Heart right ventricle (tissue), 16 donors: ENCODE measurements at regions of chr18 and their contacts with region 1.

Region 1: DNA sequence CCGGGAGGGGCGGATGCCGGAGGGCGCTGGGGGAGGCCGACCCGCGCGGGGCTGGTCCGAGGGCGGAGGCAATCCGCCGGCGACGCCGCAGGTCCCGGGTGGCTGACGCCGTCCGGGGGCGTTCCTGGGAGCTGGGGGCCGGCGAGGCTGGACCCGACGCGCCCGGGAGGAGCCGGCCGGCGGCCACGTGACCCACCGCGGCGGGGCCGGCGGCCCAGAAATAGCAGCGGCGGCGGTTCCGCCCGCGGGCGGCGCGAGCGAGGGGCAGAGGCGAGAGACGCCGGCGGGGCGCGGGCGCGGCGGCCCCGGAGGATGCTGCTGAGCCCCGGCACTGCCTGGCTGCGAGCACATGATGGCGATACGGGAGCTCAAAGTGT is at the start of gene RAB31:
- DNase-seq: peak; percentile 78 to 86
- ATAC-seq: peak; percentile 87 to 97 (median 92)
- H3K4me3 ChIP-seq: peak within 1 kb of the TSS; percentile 23 to 89 (median 78)
- H3K27ac ChIP-seq: peak within 1 kb of the TSS; percentile 75 to 96 (median 88)
- H3K4me1 ChIP-seq: peaks cover 0 to 69% (median 18%) of the 10 kb centered on the region in 9 donors
- H3K27me3 ChIP-seq: no peaks in the 10 kb centered on the region
- CTCF ChIP-seq: no peak
- total RNA-seq, gene RAB31: 12.7 to 47.8 (median 17.0) TPM

Region 2: GRCh38 chr18:9771261-9771976 is 63.4 kb after region 1 on chr18:
- intact Hi-C with region 1: loop called in 2 of 10 experiments (anchors 5 to 10 kb)
- DNase-seq: peak; percentile 88 to 89
- ATAC-seq: peak; percentile 90 to 98 (median 95)
- H3K4me3 ChIP-seq: peak overlapping the region in 1 of 10 donors; percentile 27
- H3K27ac ChIP-seq: peak overlapping the region in 4 of 10 donors; percentile 18 to 86 (median 28)
- H3K4me1 ChIP-seq: peaks cover 0 to 86% (median 8%) of the 10 kb centered on the region in 9 donors
- H3K27me3 ChIP-seq: no peaks in the 10 kb centered on the region
- CTCF ChIP-seq: peak; percentile 92 to 99 (median 99)

Region 3: GRCh38 chr18:9925369-9925768 is 217.3 kb after region 1 on chr18:
- intact Hi-C with region 1: loop called in 1 of 10 experiments (anchors 10 kb)
- DNase-seq: no peak
- ATAC-seq: peak in 5 of 8 donors; percentile 34 to 66 (median 51)
- H3K4me3 ChIP-seq: no peak overlapping the region
- H3K27ac ChIP-seq: peak overlapping the region in 4 of 10 donors; percentile 7 to 46 (median 32)
- H3K4me1 ChIP-seq: peaks cover 6 to 100% (median 98%) of the 10 kb centered on the region in 9 donors
- H3K27me3 ChIP-seq: no peaks in the 10 kb centered on the region
- CTCF ChIP-seq: no peak

Region 4: DNA sequence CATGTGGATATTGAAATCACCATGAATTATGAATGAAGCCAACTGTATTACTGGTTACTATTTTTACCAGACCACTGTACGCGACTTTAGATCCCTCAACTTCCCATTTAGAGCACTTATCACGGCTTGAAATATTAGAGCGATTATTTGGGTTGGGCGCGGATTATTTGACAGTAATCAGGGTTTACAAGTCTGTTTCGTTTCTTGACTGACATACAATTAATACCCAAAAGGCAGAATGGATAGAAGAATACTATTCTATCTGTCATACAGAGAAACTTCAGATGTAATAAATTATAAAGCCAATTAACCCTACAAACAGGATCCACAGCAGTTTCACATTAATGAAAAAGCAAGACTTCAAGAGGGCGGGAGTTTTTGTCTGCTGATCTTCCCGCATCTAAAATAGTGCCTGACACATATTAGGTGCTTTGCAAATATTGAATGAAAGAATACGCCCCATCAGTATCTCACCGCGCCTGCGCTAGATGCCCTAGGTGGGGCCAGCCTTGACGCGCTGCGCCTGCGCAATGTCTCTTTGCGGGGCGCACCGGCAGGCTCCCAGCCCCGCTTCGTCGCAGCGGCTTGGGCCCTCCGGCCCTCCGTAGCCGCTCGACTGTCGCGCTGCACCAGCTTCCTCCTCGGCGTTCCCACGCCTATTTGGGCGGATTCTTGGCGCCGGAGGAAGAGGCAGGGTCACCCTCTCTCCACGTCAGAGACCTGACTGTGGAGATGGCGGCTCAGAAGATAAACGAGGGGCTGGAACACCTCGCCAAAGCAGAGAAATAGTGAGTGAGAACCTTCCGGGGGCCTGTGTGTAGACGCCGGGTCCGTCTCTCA is 817.5 kb after region 1 on chr18 and contains the start of gene NAPG:
- intact Hi-C with region 1: loop called in 1 of 10 experiments (anchors 10 kb)
- DNase-seq: peak; percentile 93 to 94
- ATAC-seq: peak; percentile 93 to 97 (median 96)
- H3K4me3 ChIP-seq: peak within 1 kb of the TSS; percentile 81 to 96 (median 90)
- H3K27ac ChIP-seq: peak within 1 kb of the TSS; percentile 96 to 99 (median 98)
- H3K4me1 ChIP-seq: peaks cover 3 to 51% (median 40%) of the 10 kb centered on the region in 9 donors
- H3K27me3 ChIP-seq: no peaks in the 10 kb centered on the region
- CTCF ChIP-seq: no peak
- total RNA-seq, gene NAPG: 30.5 to 49.9 (median 37.6) TPM